Activated CD4-positive, alpha-beta T cell treated with anti-CD3 and anti-CD28 coated beads, Interleukin-2, amount 10 ng/mL, durations not matched to agents 24 days and 14 days (primary cell): ENCODE measurements at regions of chr6 and their contacts with region 1.

Region 1: GRCh38 chr6:28923318-28924102 is at the start of gene TRIM27:
- DNase-seq: peak; percentile 96
- H3K4me3 Mint-ChIP-seq: peak within 1 kb of the TSS; percentile 85
- H3K27ac Mint-ChIP-seq: peak within 1 kb of the TSS; percentile 93
- H3K4me1 Mint-ChIP-seq: peaks cover 27% of the 10 kb centered on the region
- H3K27me3 Mint-ChIP-seq: no peaks in the 10 kb centered on the region
- total RNA-seq, gene TRIM27: 64.8 and 67.3 TPM in 2 replicates

Region 2: GRCh38 chr6:28880894-28881780 is 42.4 kb before region 1 on chr6:
- intact Hi-C with region 1: loop called (anchors 5 kb)
- DNase-seq: peak; percentile 85
- H3K4me3 Mint-ChIP-seq: peak overlapping the region; percentile 61
- H3K27ac Mint-ChIP-seq: peak overlapping the region; percentile 34
- H3K4me1 Mint-ChIP-seq: peaks cover 26% of the 10 kb centered on the region
- H3K27me3 Mint-ChIP-seq: peaks cover 29% of the 10 kb centered on the region

Region 3: DNA sequence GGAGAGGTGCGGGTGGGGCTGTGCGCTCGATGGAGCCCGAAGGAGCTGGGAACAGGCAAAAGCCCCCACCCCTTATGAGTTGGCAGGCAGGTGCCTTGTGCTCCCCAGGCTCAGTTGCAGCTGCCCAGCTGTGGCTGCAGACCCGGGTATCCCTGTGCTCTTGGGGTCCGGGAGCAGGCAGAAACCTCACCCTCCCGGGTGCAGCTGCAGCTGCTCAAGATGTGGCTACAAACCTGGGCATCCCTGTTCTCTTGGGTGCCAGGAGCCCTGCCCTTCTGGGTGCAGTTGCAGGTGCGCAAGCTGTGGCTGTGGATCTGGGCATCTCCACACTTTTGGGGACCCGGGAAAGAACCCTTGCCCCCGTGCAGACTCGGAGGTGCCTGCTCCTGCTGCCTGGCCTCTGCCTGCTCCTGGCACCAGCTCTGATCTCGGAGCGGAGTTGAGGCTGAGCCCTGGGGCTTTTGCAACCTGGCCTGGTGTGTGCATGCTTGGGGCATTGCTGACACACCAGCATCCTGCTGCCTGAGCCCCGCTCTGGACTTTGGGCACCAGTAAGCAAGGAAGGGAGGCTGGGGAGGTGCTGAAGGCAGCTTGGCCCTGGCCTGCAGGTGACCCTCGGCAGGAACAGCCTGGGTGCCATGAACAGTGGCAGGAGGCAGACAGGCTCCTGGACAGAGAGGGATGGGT is 206.0 kb after region 1 on chr6:
- intact Hi-C with region 1: no loop called
- DNase-seq: no peak
- H3K4me3 Mint-ChIP-seq: no peak overlapping the region
- H3K27ac Mint-ChIP-seq: no peak overlapping the region
- H3K4me1 Mint-ChIP-seq: no peaks in the 10 kb centered on the region
- H3K27me3 Mint-ChIP-seq: peaks cover 6% of the 10 kb centered on the region